ENCODE measurements at regions of chr6 and their contacts with region 1.

Region 1: GRCh38 chr6:136317021-136317694 is 27.5 kb upstream of the BCLAF1 start:
- DNase-seq: peak; percentile 64 to 82 (median 67)
- ATAC-seq: peak; percentile 91
- H3K4me3 ChIP-seq: no peak overlapping the region
- H3K27ac ChIP-seq: no peak overlapping the region
- H3K4me1 ChIP-seq: no peaks in the 10 kb centered on the region
- H3K27me3 ChIP-seq: peaks cover 4 to 6% of the 10 kb centered on the region in 2 experiments; a peak in 4 of 5 replicates
- CTCF ChIP-seq: peak; percentile 75 to 95 (median 84)
- EP300 ChIP-seq: no peak
- POLR2A ChIP-seq: no peak
- RAD21 ChIP-seq: peak; percentile 83 to 95

Region 2: DNA sequence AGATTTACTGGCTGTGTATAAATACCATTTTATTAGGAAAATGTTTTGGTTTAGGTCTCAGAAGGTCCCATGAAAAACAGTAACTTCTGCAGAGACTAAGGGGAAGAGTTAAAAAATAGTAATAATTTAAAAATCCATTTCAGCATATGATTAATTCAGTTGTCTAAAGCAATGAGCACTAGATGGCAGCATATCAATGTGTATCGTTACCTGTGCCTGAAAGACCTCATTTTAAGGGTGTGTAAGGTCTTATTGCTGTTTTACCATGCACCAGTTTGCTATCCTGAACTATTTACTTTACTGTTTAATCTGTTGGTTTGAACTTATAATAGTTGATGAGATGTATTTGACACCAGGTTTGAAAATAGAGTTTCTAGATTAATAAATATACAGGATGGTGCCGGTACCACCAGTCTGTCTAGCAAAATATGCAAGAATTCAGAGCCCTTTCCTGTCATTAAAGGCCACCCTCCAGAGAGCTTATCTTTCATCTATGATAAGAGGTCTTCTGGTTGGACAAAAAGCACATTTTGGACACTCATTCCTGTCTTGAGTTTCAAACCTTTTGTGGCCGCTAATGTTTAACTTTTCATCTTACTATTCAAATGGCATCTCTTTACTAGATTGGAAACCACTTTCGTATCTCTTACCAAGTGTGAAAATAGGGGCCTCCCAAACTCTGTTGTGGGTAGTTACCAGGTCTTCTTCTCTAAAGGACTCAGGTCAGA is 810.7 kb before region 1 on chr6:
- CTCF ChIA-PET with region 1: interaction called, 3 read pairs
- POLR2A ChIA-PET with region 1: no interaction called
- in situ Hi-C with region 1: no loop called
- intact Hi-C with region 1: loop called (anchors 10 kb)
- DNase-seq: peak; percentile 29 to 67 (median 48)
- ATAC-seq: peak; percentile 93
- H3K4me3 ChIP-seq: no peak overlapping the region
- H3K27ac ChIP-seq: no peak overlapping the region
- H3K4me1 ChIP-seq: peaks cover 0 to 6% of the 10 kb centered on the region in 2 experiments; a peak in 3 of 5 replicates
- H3K27me3 ChIP-seq: no peaks in the 10 kb centered on the region
- CTCF ChIP-seq: peak; percentile 49 to 90 (median 73); a peak in 5 of 6 replicates
- EP300 ChIP-seq: no peak
- POLR2A ChIP-seq: no peak
- RAD21 ChIP-seq: peak; percentile 93 to 94

Region 3: DNA sequence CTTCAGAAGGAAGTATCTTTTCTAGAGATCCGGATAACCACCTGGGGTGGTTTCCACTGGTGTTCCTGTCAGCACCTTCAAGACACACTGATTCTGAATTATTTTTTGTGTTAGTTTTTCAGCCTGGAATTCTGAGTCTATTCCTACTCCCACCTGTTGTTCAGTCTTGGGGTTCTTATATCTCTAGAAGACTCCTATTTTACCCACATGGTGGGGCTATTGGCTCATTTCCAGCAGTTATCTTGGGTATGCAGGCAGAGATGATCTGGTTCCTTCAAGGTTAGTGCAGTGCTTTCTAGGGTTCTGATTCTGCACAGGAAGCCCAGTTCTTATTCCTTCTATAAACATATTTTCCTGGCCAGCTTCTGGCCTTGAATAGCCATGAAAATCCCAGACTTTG is 641.3 kb before region 1 on chr6:
- CTCF ChIA-PET with region 1: no interaction called
- POLR2A ChIA-PET with region 1: no interaction called
- in situ Hi-C with region 1: no loop called
- intact Hi-C with region 1: loop called (anchors 10 kb)
- DNase-seq: peak; percentile 43 to 67 (median 50)
- ATAC-seq: peak; percentile 87
- H3K4me3 ChIP-seq: no peak overlapping the region
- H3K27ac ChIP-seq: no peak overlapping the region
- H3K4me1 ChIP-seq: no peaks in the 10 kb centered on the region
- H3K27me3 ChIP-seq: peaks cover 0 to 4% of the 10 kb centered on the region in 2 experiments; a peak in 1 of 5 replicates
- CTCF ChIP-seq: peak in 2 of 3 experiments; percentile 54 to 56; a peak in 5 of 6 replicates
- EP300 ChIP-seq: no peak
- POLR2A ChIP-seq: no peak
- RAD21 ChIP-seq: peak; percentile 57 to 80

Region 4: GRCh38 chr6:135801755-135802465 is 515.2 kb before region 1 on chr6:
- CTCF ChIA-PET with region 1: no interaction called
- POLR2A ChIA-PET with region 1: no interaction called
- in situ Hi-C with region 1: no loop called
- intact Hi-C with region 1: no loop called
- DNase-seq: no peak
- ATAC-seq: no peak
- H3K4me3 ChIP-seq: no peak overlapping the region
- H3K27ac ChIP-seq: no peak overlapping the region
- H3K4me1 ChIP-seq: no peaks in the 10 kb centered on the region
- H3K27me3 ChIP-seq: no peaks in the 10 kb centered on the region; a peak in 1 of 5 replicates
- CTCF ChIP-seq: no peak
- EP300 ChIP-seq: no peak
- POLR2A ChIP-seq: no peak
- RAD21 ChIP-seq: no peak

Region 5: GRCh38 chr6:135850882-135851281 is 466.3 kb before region 1 on chr6:
- CTCF ChIA-PET with region 1: no interaction called
- POLR2A ChIA-PET with region 1: no interaction called
- in situ Hi-C with region 1: no loop called
- intact Hi-C with region 1: no loop called
- DNase-seq: no peak
- ATAC-seq: no peak
- H3K4me3 ChIP-seq: no peak overlapping the region
- H3K27ac ChIP-seq: no peak overlapping the region
- H3K4me1 ChIP-seq: no peaks in the 10 kb centered on the region
- H3K27me3 ChIP-seq: no peaks in the 10 kb centered on the region; a peak in 1 of 5 replicates
- CTCF ChIP-seq: no peak
- EP300 ChIP-seq: no peak
- POLR2A ChIP-seq: no peak
- RAD21 ChIP-seq: no peak

Region 6: GRCh38 chr6:135938576-135939207 is 378.5 kb before region 1 on chr6:
- CTCF ChIA-PET with region 1: interaction called, 5 read pairs
- POLR2A ChIA-PET with region 1: no interaction called
- in situ Hi-C with region 1: no loop called
- intact Hi-C with region 1: loop called (anchors 10 kb)
- DNase-seq: peak in 2 of 4 experiments; percentile 28 to 32
- ATAC-seq: peak; percentile 91
- H3K4me3 ChIP-seq: no peak overlapping the region
- H3K27ac ChIP-seq: no peak overlapping the region
- H3K4me1 ChIP-seq: no peaks in the 10 kb centered on the region
- H3K27me3 ChIP-seq: no peaks in the 10 kb centered on the region; a peak in 1 of 5 replicates
- CTCF ChIP-seq: peak; percentile 30 to 52 (median 42); a peak in 4 of 6 replicates
- EP300 ChIP-seq: no peak
- POLR2A ChIP-seq: no peak
- RAD21 ChIP-seq: peak; percentile 39 to 53; a peak in 3 of 4 replicates

Region 7: GRCh38 chr6:136037876-136038460 is 279.2 kb before region 1 on chr6:
- CTCF ChIA-PET with region 1: no interaction called
- POLR2A ChIA-PET with region 1: no interaction called
- in situ Hi-C with region 1: no loop called
- intact Hi-C with region 1: loop called (anchors 5 kb)
- DNase-seq: no peak
- ATAC-seq: no peak; the same call in 2 of the 3 replicates
- H3K4me3 ChIP-seq: no peak overlapping the region
- H3K27ac ChIP-seq: no peak overlapping the region
- H3K4me1 ChIP-seq: no peaks in the 10 kb centered on the region
- H3K27me3 ChIP-seq: peaks cover 5 to 21% of the 10 kb centered on the region in 2 experiments; a peak in 4 of 5 replicates
- CTCF ChIP-seq: no peak
- EP300 ChIP-seq: no peak
- POLR2A ChIP-seq: no peak
- RAD21 ChIP-seq: no peak

Region 8: GRCh38 chr6:136201732-136202131 is 115.4 kb before region 1 on chr6:
- CTCF ChIA-PET with region 1: no interaction called
- POLR2A ChIA-PET with region 1: no interaction called
- in situ Hi-C with region 1: no loop called
- intact Hi-C with region 1: loop called (anchors 5 kb)
- DNase-seq: no peak
- ATAC-seq: no peak
- H3K4me3 ChIP-seq: no peak overlapping the region
- H3K27ac ChIP-seq: no peak overlapping the region
- H3K4me1 ChIP-seq: no peaks in the 10 kb centered on the region
- H3K27me3 ChIP-seq: peaks cover 5 to 14% of the 10 kb centered on the region in 2 experiments; a peak in 3 of 5 replicates
- CTCF ChIP-seq: no peak
- EP300 ChIP-seq: no peak
- POLR2A ChIP-seq: no peak
- RAD21 ChIP-seq: 0 out of 4 replicates have a peak, but pooled peaks of 1 of the 2 experiments have one; percentile 3